Calu3 (cell line): ENCODE measurements at regions of chr11 and their contacts with region 1.

Region 1: GRCh38 chr11:56624661-56625110 is 10.0 kb upstream of the OR5M1 start:
- DNase-seq: peak; percentile 51
- H3K4me3 Mint-ChIP-seq: no peak overlapping the region
- H3K27ac Mint-ChIP-seq: no peak overlapping the region
- H3K4me1 Mint-ChIP-seq: no peaks in the 10 kb centered on the region
- H3K27me3 Mint-ChIP-seq: peaks cover 13% of the 10 kb centered on the region
- CTCF ChIP-seq: peak; percentile 45

Region 2: GRCh38 chr11:56700242-56700913 is 75.7 kb after region 1 on chr11:
- CTCF ChIA-PET with region 1: no interaction called
- intact Hi-C with region 1: loop called (anchors 5 kb)
- DNase-seq: peak; percentile 51
- H3K4me3 Mint-ChIP-seq: no peak overlapping the region
- H3K27ac Mint-ChIP-seq: no peak overlapping the region
- H3K4me1 Mint-ChIP-seq: no peaks in the 10 kb centered on the region
- H3K27me3 Mint-ChIP-seq: no peaks in the 10 kb centered on the region
- CTCF ChIP-seq: no peak

Region 3: DNA sequence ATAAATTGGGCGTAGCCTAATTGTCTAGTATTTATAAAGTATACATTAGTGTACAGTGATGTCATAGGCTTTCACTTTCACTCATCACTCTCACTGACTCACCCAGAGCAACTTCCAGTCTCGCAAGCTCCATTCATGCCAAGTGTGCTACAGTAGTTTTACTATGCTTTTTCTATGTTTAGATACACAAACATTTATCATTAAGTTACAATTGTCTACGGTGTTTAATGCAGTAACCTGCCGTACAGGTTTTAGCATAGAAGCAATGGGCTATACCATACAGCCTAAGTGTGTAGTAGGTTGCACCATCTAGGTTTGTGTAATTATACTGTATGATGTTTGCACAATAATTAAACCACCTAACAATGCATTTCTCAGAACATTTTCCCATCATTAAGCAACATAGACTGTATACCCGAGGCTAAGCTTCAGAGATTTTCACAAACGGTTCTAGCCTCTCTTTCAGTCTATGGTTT is 91.7 kb after region 1 on chr11:
- CTCF ChIA-PET with region 1: no interaction called
- intact Hi-C with region 1: loop called (anchors 5 kb)
- DNase-seq: no peak
- H3K4me3 Mint-ChIP-seq: no peak overlapping the region
- H3K27ac Mint-ChIP-seq: no peak overlapping the region
- H3K4me1 Mint-ChIP-seq: no peaks in the 10 kb centered on the region
- H3K27me3 Mint-ChIP-seq: peaks cover 13% of the 10 kb centered on the region
- CTCF ChIP-seq: no peak

Region 4: DNA sequence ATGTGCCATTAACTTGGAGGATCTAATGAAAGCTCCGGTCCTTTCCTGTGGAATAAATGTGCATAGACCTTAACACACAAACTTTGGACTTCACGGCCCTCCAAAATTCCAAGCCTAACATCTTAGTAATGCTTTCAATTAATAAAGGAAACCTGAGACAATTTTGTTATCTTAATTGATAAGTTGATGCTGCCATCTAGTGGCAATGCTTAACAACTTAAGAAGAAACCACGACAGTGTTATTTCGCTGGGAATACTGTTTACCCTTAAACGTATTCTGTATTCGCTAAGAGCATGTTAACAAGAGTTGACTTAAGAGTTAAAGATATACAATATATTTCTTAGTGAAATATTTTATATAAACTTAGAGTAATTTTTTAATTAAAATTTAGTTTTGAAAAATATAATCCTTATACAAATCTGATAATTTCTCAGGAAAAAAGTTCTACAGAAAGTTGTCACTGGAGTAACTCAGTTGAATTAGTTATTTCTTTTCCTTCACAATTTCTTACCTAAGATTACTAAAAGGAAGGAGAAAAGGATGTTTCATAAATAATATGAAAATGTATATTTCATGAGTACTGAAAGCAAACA is 158.9 kb after region 1 on chr11:
- CTCF ChIA-PET with region 1: no interaction called
- intact Hi-C with region 1: loop called (anchors 1 kb)
- DNase-seq: peak; percentile 17
- H3K4me3 Mint-ChIP-seq: no peak overlapping the region
- H3K27ac Mint-ChIP-seq: no peak overlapping the region
- H3K4me1 Mint-ChIP-seq: no peaks in the 10 kb centered on the region
- H3K27me3 Mint-ChIP-seq: no peaks in the 10 kb centered on the region
- CTCF ChIP-seq: peak; percentile 41

Region 5: GRCh38 chr11:56841210-56841810 is 216.6 kb after region 1 on chr11:
- CTCF ChIA-PET with region 1: no interaction called
- intact Hi-C with region 1: no loop called
- DNase-seq: peak; percentile 67
- H3K4me3 Mint-ChIP-seq: no peak overlapping the region
- H3K27ac Mint-ChIP-seq: peak overlapping the region; percentile 87
- H3K4me1 Mint-ChIP-seq: peaks cover 33% of the 10 kb centered on the region
- H3K27me3 Mint-ChIP-seq: no peaks in the 10 kb centered on the region
- CTCF ChIP-seq: peak; percentile 65